HEK293 (cell line): ENCODE measurements at regions of chr19 and their contacts with region 1.

Region 1: DNA sequence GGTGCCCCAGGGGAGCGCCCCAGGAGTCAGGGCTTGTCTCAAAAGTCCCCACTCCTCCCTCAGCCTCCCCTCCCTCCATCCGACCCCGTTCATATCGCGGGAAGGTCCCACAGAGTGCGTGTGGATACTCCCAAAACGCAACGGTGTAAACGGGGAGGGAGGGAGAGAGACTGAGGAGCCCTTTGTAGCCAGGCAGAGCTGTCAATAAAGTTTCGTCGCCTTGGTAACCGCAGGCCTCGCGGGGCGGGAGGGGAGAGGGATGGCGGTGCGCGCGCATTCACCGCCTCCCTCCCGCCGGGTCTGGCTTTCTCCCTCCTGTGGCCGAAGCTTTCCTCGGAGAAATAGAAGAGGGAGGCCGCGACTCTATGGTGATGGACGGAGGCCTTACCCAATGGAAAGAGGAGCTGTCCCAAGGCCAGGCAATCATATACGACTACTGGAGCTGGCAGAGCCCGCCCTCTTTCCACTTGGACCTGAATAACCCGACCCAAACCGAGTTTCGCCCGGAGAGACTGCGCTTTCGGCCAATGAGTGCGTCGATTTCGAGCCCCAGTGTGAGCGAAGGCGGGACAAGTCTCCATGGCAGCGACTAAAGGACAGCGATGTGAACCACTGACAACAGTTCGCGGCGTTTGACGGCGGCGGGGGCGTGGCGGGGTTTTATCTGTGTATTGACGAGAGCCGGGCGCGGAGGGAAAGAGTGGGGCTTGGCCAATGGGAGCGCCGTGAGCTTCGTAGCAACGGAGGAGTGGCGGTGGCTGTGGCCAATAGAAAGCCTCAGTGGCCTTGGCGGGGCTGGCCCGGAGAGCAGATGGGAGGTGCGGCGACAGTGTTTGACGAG is at the start of gene KMT5C:
- H3K4me3 ChIP-seq: peak within 1 kb of the TSS; percentile 88
- H3K27ac ChIP-seq: peak within 1 kb of the TSS; percentile 89
- H3K4me1 ChIP-seq: peaks cover 14% of the 10 kb centered on the region
- CTCF ChIP-seq: no peak; the same call in 1 of the 2 replicates

Region 2: DNA sequence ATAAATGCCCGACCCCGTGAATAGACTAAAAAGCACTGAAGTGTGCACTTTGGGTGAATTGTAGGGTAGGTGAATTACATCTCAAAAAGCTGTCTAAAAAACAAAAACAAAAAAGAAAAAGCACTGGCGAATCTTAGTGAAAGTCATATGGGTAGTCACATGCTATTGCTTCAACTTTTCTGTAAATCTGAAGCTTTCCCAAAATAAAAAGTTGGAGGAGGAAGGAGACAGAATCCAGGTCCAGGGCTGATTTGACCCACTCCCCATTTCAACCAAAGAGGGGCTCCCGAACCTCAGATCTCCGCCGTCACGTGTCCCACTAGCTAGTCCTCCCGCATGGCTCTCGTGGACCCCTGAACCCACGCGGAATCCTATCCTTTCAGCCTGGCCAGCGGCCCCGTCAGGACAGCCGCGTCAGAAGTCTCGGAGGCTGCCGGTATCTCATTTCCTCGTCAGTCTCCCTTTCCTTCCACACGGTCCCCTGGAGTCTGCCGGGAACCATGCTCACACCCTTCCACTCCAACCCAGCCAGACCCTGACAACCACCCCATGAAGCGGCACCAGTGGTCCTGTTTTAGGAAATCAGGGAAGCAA is 227.9 kb before region 1 on chr19:
- CTCF ChIA-PET with region 1: no interaction called
- POLR2A ChIA-PET with region 1: no interaction called
- H3K4me3 ChIP-seq: no peak overlapping the region
- H3K27ac ChIP-seq: no peak overlapping the region
- H3K4me1 ChIP-seq: peaks cover 18% of the 10 kb centered on the region
- CTCF ChIP-seq: no peak

Region 3: DNA sequence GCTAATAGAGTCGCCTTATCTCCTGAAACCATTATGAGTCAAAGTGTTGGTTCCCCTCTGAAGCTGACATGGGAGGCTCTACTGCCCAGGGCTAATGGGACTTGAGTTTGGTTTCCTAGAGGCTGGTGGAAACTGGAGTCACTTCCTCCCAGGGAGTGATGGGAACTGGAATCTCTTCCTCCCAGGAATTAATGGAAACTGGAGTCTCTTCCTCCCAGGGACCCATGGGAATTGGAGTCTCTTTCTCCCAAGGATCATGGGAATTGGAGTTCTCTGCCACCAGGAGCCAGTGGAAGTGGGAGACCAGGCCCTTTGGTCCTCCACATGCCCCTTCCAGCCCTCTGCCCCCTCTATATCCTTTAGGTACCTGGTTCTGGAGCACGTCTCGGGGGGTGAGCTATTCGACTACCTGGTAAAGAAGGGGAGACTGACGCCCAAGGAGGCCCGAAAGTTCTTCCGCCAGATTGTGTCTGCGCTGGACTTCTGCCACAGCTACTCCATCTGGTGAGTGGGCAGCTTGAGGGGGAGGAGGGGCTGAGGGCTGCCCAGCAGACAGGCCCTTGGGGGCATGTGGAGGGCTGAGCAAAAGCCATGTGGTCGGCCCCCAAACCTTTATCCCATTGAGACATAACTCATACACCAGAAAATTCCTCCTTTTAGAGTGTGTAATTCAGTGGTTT is 50.0 kb before region 1 on chr19:
- CTCF ChIA-PET with region 1: interaction called, 5 read pairs
- POLR2A ChIA-PET with region 1: interaction called, 10 read pairs
- H3K4me3 ChIP-seq: no peak overlapping the region
- H3K27ac ChIP-seq: no peak overlapping the region
- H3K4me1 ChIP-seq: no peaks in the 10 kb centered on the region
- CTCF ChIP-seq: no peak

Region 4: DNA sequence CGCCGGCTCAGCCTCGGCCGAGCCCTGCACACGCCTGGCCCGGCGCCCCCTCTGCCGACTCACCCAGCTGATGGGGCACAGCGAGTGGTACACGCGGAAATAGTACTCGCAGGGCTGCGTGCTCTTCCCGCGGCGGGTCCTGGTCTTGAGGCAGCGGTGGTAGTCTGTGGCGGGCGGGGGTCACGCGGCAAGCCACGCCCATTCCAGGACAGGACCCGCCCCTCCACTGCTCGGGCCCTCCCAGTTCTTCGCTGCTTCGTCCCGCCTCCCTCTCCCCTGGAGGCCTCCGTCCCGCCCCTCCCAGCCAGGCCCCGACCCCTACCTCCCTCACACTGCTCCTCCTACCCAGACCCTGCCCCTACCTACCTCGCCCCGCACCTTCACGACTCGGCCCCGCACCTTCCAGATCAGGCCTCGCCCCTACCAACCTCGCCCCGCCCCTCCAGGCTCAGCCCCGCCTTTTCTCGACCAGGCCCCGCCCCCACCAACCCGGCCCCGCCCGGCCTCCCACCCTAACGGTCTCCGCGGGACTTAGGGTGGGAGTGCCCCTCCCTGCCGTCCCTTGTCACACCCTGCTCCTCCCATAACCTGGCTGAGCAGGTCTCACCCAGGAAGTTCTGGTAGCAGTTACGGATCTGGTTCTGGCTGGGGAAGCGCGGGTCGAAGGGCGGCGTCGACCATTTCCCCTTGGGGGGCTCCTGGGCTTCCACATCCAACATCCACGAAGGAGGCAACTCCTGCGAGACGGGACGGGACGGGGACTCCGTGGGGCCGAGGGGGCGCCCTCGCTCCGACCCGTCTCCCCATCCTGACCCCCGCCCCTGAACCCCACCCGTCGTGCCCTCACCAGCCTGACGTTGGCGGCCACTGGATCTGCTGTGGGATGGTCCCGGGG is 14.8 kb after region 1 on chr19:
- CTCF ChIA-PET with region 1: interaction called, 6 read pairs
- POLR2A ChIA-PET with region 1: interaction called, 95 read pairs
- H3K4me3 ChIP-seq: peak overlapping the region; percentile 54
- H3K27ac ChIP-seq: no peak overlapping the region
- H3K4me1 ChIP-seq: peaks cover 8% of the 10 kb centered on the region; the same call in 1 of the 2 replicates
- CTCF ChIP-seq: no peak

Region 5: GRCh38 chr19:55391702-55392615 is 52.7 kb after region 1 on chr19:
- CTCF ChIA-PET with region 1: interaction called, 3 read pairs
- POLR2A ChIA-PET with region 1: interaction called, 18 read pairs
- H3K4me3 ChIP-seq: no peak overlapping the region
- H3K27ac ChIP-seq: no peak overlapping the region
- H3K4me1 ChIP-seq: peaks cover 24% of the 10 kb centered on the region
- CTCF ChIP-seq: no peak

Region 6: DNA sequence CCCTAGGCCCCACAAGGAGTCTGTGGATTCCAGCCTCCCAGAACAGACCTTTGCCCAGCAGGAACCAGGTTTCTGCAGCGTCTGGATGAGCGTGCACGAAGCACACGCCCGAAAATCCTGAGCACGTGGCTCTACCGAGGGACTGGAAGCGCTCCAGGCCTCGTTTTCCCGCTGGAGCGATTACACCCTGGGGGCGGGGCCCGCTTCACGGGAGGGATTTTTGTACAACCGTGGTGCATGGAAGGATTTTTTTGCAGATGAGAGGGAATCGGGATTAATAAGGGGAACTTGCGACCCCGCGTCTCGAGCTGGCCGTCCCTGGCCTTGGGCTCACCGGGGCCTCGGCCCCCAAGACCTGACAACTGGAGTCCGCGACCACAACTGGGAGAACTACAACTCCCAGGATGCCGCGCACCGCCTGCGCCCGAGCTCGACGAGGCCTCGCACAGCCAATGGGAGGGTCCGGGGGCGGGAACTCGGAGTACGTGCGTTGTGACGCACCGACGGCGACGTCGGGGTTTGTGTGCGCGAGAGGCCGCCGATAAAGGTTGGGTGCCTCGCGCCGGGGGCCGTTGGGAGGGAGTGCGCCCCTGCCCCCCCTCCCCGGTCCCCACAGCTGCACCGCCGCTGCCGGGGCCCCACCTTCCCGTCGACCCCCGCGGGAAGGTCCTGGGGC is 137.0 kb after region 1 on chr19 and contains the start of gene ZNF628:
- CTCF ChIA-PET with region 1: no interaction called
- POLR2A ChIA-PET with region 1: interaction called, 14 read pairs
- H3K4me3 ChIP-seq: peak within 1 kb of the TSS; percentile 68
- H3K27ac ChIP-seq: peak within 1 kb of the TSS; percentile 76
- H3K4me1 ChIP-seq: peaks cover 8% of the 10 kb centered on the region; the same call in 1 of the 2 replicates
- CTCF ChIP-seq: no peak